ENCODE measurements at regions of chr1 and their contacts with region 1.

Region 1: DNA sequence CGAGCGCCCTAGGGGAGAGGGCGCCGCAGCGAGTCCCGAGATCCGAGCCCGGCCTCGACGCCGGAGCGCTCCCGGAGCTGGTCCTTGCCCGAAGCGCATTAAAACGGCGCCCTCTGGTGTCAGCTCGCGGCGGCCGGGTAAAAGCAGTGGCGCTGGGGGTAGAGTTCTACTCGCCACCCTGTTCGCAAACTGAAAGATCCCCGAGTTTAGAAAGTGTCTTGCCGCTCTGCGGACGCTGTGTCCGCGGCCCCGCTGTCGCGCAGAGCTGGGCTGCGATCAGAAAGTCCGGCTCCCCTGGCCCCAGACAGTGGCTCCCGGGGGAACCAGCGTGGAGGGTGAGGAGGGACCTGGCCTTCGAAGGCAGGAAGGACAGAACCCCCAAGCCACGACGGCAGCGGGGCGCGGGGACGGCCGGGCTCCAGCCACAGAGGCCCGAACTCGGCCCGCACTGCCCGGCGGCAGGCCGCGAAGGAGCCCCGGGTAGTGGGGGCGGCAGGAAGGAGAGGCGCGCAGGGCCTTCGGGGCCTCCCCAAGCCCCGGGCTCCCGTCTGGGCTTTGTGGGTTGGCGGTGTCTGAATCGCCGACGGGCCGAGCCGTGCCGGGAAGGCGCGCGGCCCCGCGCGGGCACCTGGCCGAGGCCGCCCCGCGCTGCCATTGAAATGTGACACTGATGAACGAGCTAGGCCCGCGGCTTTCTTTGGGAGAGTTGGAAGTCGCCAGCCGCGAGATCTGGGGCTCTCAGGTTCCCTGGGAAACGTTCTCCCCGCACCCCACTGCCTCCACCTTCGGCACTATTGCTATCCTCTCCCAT is 39.1 kb upstream of the NFIA start:
- DNase-seq: peak; percentile 71
- H3K4me3 Mint-ChIP-seq: peak overlapping the region; percentile 48
- H3K27ac Mint-ChIP-seq: no peak overlapping the region
- H3K4me1 Mint-ChIP-seq: no peaks in the 10 kb centered on the region
- H3K27me3 Mint-ChIP-seq: peaks cover 45% of the 10 kb centered on the region

Region 2: DNA sequence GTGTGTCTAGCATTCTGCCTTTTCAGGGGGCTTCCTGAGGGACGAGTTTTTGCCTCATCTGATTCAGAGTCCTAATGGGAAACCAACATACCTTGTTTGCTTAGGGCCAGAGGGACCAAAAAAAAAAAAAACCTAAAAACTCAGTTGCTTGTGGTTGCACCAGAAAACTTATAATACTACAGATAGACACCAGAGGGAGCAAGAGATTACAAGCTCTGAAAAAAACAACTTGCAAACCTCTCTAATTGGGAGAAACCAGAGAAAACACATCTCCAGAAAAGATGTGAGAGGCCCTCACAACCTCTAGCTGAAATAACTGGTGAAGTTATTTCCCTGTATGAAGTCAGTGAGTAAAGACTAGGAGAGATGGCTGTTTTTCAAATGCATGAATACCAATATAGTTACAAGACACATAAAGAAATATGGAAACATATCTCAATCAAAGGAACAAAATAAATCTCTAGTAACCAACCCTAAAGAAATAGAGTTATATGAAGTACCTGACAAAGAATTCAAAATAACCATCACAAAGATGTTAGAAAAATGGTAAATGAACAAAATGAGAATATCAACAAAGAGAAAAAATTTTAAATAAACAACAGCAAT is 194.5 kb before region 1 on chr1:
- intact Hi-C with region 1: loop called (anchors 1 kb)
- DNase-seq: no peak
- H3K4me3 Mint-ChIP-seq: no peak overlapping the region
- H3K27ac Mint-ChIP-seq: no peak overlapping the region
- H3K4me1 Mint-ChIP-seq: no peaks in the 10 kb centered on the region
- H3K27me3 Mint-ChIP-seq: peaks cover 9% of the 10 kb centered on the region

Region 3: GRCh38 chr1:60978421-60979357 is 64.5 kb before region 1 on chr1:
- intact Hi-C with region 1: loop called (anchors 2 kb)
- DNase-seq: no peak
- H3K4me3 Mint-ChIP-seq: no peak overlapping the region
- H3K27ac Mint-ChIP-seq: no peak overlapping the region
- H3K4me1 Mint-ChIP-seq: no peaks in the 10 kb centered on the region
- H3K27me3 Mint-ChIP-seq: peaks cover 4% of the 10 kb centered on the region

Region 4: DNA sequence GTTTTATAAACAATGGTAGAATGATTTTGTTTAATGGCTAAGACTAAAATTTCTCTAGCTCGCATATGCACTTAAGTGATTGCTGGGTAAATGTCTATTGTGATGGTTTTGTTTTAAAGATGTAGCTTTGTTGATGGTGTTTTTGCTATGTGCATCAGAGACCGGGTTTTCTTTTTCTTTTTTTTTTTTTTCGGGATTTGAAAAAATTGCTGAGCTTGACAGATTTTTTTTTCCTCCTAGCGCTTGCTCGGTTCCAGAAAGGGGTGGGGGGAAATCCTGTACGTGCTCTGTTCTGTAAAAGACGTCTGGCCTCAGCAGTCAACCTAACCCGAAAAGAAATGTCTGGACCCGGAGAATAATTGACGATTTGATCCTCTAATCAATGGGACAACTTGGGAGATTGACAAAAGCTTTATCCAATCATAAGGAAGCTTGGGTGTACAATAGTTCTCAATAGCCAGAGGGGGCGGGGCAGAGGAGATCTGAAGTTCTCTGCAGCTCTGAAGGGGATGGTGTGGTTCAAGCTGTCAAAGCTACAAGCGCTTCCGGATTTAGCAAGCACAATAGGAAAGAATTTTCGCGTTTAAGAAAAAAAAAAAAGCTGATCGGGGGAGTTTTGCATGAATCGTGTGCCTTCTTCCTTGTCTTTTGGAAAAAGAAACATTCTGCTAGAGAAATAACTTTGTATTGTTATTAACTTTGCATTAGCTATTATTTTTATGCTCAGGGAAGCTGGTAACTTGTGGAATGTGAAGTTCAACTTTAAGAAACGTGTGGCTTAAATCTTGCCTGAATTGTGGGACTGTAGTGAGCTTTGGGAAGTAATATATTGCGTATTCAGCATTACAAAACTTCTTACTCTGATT is 34.7 kb after region 1 on chr1:
- intact Hi-C with region 1: no loop called
- DNase-seq: peak; percentile 80
- H3K4me3 Mint-ChIP-seq: peak overlapping the region; percentile 92
- H3K27ac Mint-ChIP-seq: peak overlapping the region; percentile 16
- H3K4me1 Mint-ChIP-seq: peaks cover 43% of the 10 kb centered on the region
- H3K27me3 Mint-ChIP-seq: peaks cover 50% of the 10 kb centered on the region

Region 5: DNA sequence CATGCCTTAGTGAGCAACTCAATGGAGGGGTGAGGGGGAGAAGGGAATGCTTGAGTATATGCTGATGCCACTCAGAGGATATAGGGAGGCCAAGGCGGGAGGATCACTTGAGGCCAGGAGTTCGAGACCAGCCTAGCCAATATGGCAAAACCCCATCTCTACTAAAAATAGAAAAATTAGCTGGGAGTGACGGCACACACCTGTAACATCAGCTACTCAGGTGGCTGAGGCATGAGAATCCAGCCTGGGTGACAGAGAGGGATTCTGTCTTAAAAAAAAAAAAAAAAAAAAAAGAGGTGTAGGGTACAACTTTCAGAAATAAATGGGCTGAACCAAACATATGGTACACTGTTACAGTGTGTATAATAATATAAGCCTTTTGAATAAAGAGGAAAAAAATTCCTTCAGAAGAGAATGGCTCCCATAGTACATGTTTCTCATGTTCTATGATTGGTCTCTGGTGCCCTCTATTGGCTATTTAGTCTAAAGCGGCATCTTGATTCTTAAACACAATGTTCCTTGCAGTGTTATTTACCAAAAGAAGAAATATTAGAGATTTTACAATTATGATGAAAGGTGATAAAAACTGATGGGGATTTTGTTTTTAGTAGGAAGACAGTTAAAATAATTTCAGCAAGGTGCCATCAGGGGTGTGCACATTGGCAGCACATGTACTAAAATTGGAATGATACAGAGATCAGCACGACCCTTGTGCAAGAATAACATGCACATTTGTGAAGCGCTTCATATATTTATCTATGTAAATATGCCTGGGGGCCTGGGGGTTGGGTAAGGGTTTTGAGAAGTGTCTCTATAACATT is 808.8 kb after region 1 on chr1:
- intact Hi-C with region 1: loop called (anchors 2 kb)
- DNase-seq: no peak
- H3K4me3 Mint-ChIP-seq: no peak overlapping the region
- H3K27ac Mint-ChIP-seq: no peak overlapping the region
- H3K4me1 Mint-ChIP-seq: no peaks in the 10 kb centered on the region
- H3K27me3 Mint-ChIP-seq: no peaks in the 10 kb centered on the region

Measured in activated T-helper 1 cell treated with anti-CD3 and anti-CD28 coated beads, Interleukin-12 subunit alpha, Interleukin-12 subunit beta, Interleukin-2, Interleukin-4 antibody, amounts not matched to agents 30 ng/mL and 10 ng/mL and 1 ng/mL, durations not matched to agents 14 hours and 24 hours and 36 hours (primary cell).